SK-N-SH (cell line): ENCODE measurements at regions of chr11 and their contacts with region 1.

Region 1: DNA sequence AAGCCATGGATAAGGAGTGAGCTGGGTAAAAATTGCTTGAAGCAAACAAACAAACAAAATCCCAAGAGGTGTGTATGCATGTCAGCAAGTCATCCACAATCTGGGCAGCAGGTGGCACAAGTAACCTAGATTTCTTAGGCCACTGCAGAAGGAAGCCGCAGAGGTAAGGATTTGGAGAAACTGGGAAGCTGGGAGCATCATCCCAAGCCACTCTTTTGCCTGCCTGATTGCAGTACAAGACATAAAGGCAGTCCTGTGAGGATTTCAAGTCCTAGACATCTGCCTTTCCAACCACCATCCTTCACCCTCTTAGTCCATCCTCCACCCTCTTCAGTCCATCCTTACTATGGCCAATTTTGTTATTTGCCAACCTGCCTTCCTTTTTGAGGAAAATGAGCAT is 67.2 kb upstream of the BMAL1 start:
- DNase-seq: peak; percentile 62
- H3K4me3 ChIP-seq: no peak overlapping the region
- H3K27ac ChIP-seq: no peak overlapping the region
- H3K4me1 ChIP-seq: peaks cover 0 to 13% of the 10 kb centered on the region in 2 experiments; a peak in 3 of 4 replicates
- H3K27me3 ChIP-seq: no peaks in the 10 kb centered on the region
- CTCF ChIP-seq: peak; percentile 86
- EP300 ChIP-seq: no peak
- RAD21 ChIP-seq: peak; percentile 96

Region 2: GRCh38 chr11:12963792-12964536 is 246.5 kb before region 1 on chr11:
- CTCF ChIA-PET with region 1: interaction called, 12 read pairs
- POLR2A ChIA-PET with region 1: no interaction called
- DNase-seq: peak; percentile 88
- H3K4me3 ChIP-seq: no peak overlapping the region
- H3K27ac ChIP-seq: no peak overlapping the region
- H3K4me1 ChIP-seq: no peaks in the 10 kb centered on the region; a peak in 1 of 4 replicates
- H3K27me3 ChIP-seq: no peaks in the 10 kb centered on the region
- CTCF ChIP-seq: peak; percentile 93
- EP300 ChIP-seq: no peak
- RAD21 ChIP-seq: peak; percentile 91

Region 3: GRCh38 chr11:13222285-13222684 is 11.9 kb after region 1 on chr11:
- CTCF ChIA-PET with region 1: interaction called, 27 read pairs
- POLR2A ChIA-PET with region 1: interaction called, 4 read pairs
- DNase-seq: no peak
- H3K4me3 ChIP-seq: no peak overlapping the region
- H3K27ac ChIP-seq: peak overlapping the region; percentile 59 to 83; a peak in 3 of 4 replicates
- H3K4me1 ChIP-seq: peaks cover 23 to 35% of the 10 kb centered on the region in 2 experiments
- H3K27me3 ChIP-seq: no peaks in the 10 kb centered on the region
- CTCF ChIP-seq: no peak
- EP300 ChIP-seq: peak in 1 of 2 experiments; percentile 52; a peak in 1 of 4 replicates
- RAD21 ChIP-seq: no peak

Region 4: DNA sequence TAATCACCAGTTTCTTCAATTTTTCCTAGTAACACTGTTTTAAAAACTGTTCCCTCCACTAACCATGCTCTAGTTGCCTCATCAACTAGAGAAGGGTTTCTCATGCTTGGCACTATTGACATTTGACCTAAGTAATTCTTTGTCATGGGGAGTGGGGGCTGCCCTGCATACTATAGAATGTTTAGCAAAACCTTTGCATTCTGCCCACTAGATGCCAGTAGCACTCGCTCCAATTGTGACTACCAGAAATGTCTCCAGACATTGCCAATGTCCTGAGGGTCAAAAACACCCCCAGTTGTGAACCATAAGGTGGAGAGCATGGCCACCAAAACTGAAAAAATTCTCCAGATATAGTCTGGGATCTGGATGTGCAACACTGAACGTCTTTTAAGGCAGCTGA is 39.6 kb after region 1 on chr11:
- CTCF ChIA-PET with region 1: interaction called, 11 read pairs
- POLR2A ChIA-PET with region 1: no interaction called
- DNase-seq: no peak
- H3K4me3 ChIP-seq: no peak overlapping the region
- H3K27ac ChIP-seq: no peak overlapping the region
- H3K4me1 ChIP-seq: no peaks in the 10 kb centered on the region
- H3K27me3 ChIP-seq: no peaks in the 10 kb centered on the region
- CTCF ChIP-seq: peak; percentile 50
- EP300 ChIP-seq: no peak
- RAD21 ChIP-seq: peak; percentile 56

Region 5: GRCh38 chr11:13289081-13289480 is 78.7 kb after region 1 on chr11:
- CTCF ChIA-PET with region 1: interaction called, 11 read pairs
- POLR2A ChIA-PET with region 1: no interaction called
- DNase-seq: peak; percentile 38
- H3K4me3 ChIP-seq: no peak overlapping the region
- H3K27ac ChIP-seq: peak overlapping the region; percentile 38 to 80
- H3K4me1 ChIP-seq: peaks cover 4 to 14% of the 10 kb centered on the region in 2 experiments; a peak in 3 of 4 replicates
- H3K27me3 ChIP-seq: no peaks in the 10 kb centered on the region
- CTCF ChIP-seq: peak; percentile 33
- EP300 ChIP-seq: no peak
- RAD21 ChIP-seq: peak; percentile 62

Region 6: GRCh38 chr11:13335319-13335718 is 124.9 kb after region 1 on chr11:
- CTCF ChIA-PET with region 1: interaction called, 177 read pairs
- POLR2A ChIA-PET with region 1: interaction called, 4 read pairs
- DNase-seq: peak; percentile 69
- H3K4me3 ChIP-seq: no peak overlapping the region; a peak in 1 of 4 replicates
- H3K27ac ChIP-seq: no peak overlapping the region
- H3K4me1 ChIP-seq: peaks cover 16 to 47% of the 10 kb centered on the region in 2 experiments
- H3K27me3 ChIP-seq: no peaks in the 10 kb centered on the region
- CTCF ChIP-seq: peak; percentile 91
- EP300 ChIP-seq: no peak
- RAD21 ChIP-seq: peak; percentile 90

Region 7: GRCh38 chr11:13384908-13385640 is 174.7 kb after region 1 on chr11:
- CTCF ChIA-PET with region 1: interaction called, 91 read pairs
- POLR2A ChIA-PET with region 1: no interaction called
- DNase-seq: peak; percentile 39
- H3K4me3 ChIP-seq: no peak overlapping the region; a peak in 1 of 4 replicates
- H3K27ac ChIP-seq: peak overlapping the region; percentile 2 to 34; a peak in 2 of 4 replicates
- H3K4me1 ChIP-seq: no peaks in the 10 kb centered on the region; a peak in 1 of 4 replicates
- H3K27me3 ChIP-seq: no peaks in the 10 kb centered on the region
- CTCF ChIP-seq: peak; percentile 85
- EP300 ChIP-seq: no peak
- RAD21 ChIP-seq: peak; percentile 70

Region 8: GRCh38 chr11:13606701-13607100 is 396.3 kb after region 1 on chr11:
- CTCF ChIA-PET with region 1: no interaction called
- POLR2A ChIA-PET with region 1: no interaction called
- DNase-seq: no peak
- H3K4me3 ChIP-seq: no peak overlapping the region
- H3K27ac ChIP-seq: no peak overlapping the region
- H3K4me1 ChIP-seq: no peaks in the 10 kb centered on the region
- H3K27me3 ChIP-seq: no peaks in the 10 kb centered on the region
- CTCF ChIP-seq: no peak
- EP300 ChIP-seq: no peak
- RAD21 ChIP-seq: no peak